ENCODE measurements at regions of chr1 and their contacts with region 1.

Region 1: GRCh38 chr1:15352123-15352957 is 57.3 kb upstream of the EFHD2 start:
- DNase-seq: peak; percentile 84 to 94
- H3K4me3 ChIP-seq: no peak overlapping the region; the same call in 1 of the 2 replicates
- H3K27ac ChIP-seq: peak overlapping the region; percentile 91
- H3K4me1 ChIP-seq: peaks cover 80% of the 10 kb centered on the region
- H3K27me3 ChIP-seq: no peaks in the 10 kb centered on the region
- CTCF ChIP-seq: no peak

Region 2: GRCh38 chr1:15206418-15207030 is 145.8 kb before region 1 on chr1:
- CTCF ChIA-PET with region 1: no interaction called
- POLR2A ChIA-PET with region 1: no interaction called
- intact Hi-C with region 1: loop called (anchors 5 kb)
- DNase-seq: peak; percentile 59 to 88
- H3K4me3 ChIP-seq: no peak overlapping the region; the same call in 1 of the 2 replicates
- H3K27ac ChIP-seq: peak overlapping the region; percentile 68
- H3K4me1 ChIP-seq: peaks cover 33% of the 10 kb centered on the region
- H3K27me3 ChIP-seq: no peaks in the 10 kb centered on the region
- CTCF ChIP-seq: no peak

Region 3: GRCh38 chr1:15303935-15304334 is 48.4 kb before region 1 on chr1:
- CTCF ChIA-PET with region 1: no interaction called
- POLR2A ChIA-PET with region 1: no interaction called
- intact Hi-C with region 1: no loop called
- DNase-seq: no peak
- H3K4me3 ChIP-seq: no peak overlapping the region
- H3K27ac ChIP-seq: no peak overlapping the region
- H3K4me1 ChIP-seq: no peaks in the 10 kb centered on the region
- H3K27me3 ChIP-seq: no peaks in the 10 kb centered on the region
- CTCF ChIP-seq: no peak

Region 4: GRCh38 chr1:15417365-15417934 is 65.1 kb after region 1 on chr1:
- CTCF ChIA-PET with region 1: no interaction called
- POLR2A ChIA-PET with region 1: no interaction called
- intact Hi-C with region 1: loop called (anchors 2 kb)
- DNase-seq: peak; percentile 75 to 76
- H3K4me3 ChIP-seq: peak overlapping the region; percentile 39; the same call in 1 of the 2 replicates
- H3K27ac ChIP-seq: peak overlapping the region; percentile 87
- H3K4me1 ChIP-seq: peaks cover 43% of the 10 kb centered on the region
- H3K27me3 ChIP-seq: no peaks in the 10 kb centered on the region
- CTCF ChIP-seq: no peak

Region 5: DNA sequence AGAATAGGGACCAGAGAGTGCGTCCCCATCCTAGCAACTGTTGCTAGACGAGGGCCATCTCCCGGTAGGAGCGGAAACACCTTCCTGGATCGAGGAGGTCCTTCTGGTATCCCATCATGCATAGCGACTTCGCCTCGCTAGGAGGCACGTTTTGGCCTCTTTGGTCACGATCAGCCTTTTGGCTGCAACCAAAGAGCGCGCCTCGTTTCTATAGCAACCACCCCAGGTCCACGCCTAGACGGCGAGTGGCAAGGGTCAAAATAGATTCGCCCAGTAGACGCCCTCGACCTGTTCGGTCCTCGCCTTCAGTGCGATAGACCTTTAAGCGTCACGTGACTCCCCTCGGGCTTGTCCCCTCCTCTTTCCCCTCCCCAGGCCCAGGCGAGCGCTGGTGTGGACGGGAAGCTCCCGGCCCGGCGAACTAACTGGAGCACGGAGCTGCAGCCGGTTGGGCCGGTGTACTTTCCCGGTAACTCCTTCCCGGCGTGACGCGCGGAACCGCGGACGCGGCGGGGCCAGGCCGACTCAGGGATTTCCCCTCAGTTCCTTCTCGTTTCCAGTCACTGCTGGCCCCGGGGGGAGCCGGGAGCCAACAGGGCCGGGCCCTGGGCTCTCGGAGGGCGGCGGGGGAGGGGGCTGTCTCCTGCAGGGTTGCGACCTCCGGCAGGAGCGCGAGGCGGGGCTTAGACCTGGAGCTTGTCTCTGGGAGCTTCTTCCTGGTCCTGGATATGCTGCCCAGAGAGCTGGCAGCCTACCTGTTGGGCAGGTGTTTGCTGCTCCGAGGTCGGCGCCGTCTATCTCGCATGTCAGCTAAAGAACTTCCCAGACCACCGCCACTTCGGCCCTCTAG is 174.4 kb after region 1 on chr1 and contains the start of gene DNAJC16:
- CTCF ChIA-PET with region 1: no interaction called
- POLR2A ChIA-PET with region 1: no interaction called
- intact Hi-C with region 1: loop called (anchors 10 kb)
- DNase-seq: peak; percentile 98 to 99
- H3K4me3 ChIP-seq: peak within 1 kb of the TSS; percentile 81
- H3K27ac ChIP-seq: peak within 1 kb of the TSS; percentile 69
- H3K4me1 ChIP-seq: peaks cover 17% of the 10 kb centered on the region
- H3K27me3 ChIP-seq: no peaks in the 10 kb centered on the region
- CTCF ChIP-seq: no peak
- total RNA-seq, gene DNAJC16: 12.0 and 18.8 TPM in 2 replicates

Region 6: GRCh38 chr1:15684468-15685291 is 332.3 kb after region 1 on chr1:
- CTCF ChIA-PET with region 1: no interaction called
- POLR2A ChIA-PET with region 1: no interaction called
- intact Hi-C with region 1: loop called (anchors 1 kb)
- DNase-seq: no peak
- H3K4me3 ChIP-seq: peak overlapping the region; percentile 61
- H3K27ac ChIP-seq: no peak overlapping the region
- H3K4me1 ChIP-seq: peaks cover 49% of the 10 kb centered on the region
- H3K27me3 ChIP-seq: no peaks in the 10 kb centered on the region
- CTCF ChIP-seq: no peak

Measured in PC-9 (cell line).